Heart left ventricle (tissue), 16 donors: ENCODE measurements at regions of chr10 and their contacts with region 1.

Region 1: GRCh38 chr10:101012525-101013364 is 13.1 kb downstream of the LZTS2 start:
- DNase-seq: peak; percentile 88 to 94 (median 90)
- ATAC-seq: peak; percentile 84 to 94 (median 90)
- H3K4me3 ChIP-seq: no peak overlapping the region
- H3K27ac ChIP-seq: peak overlapping the region in 11 of 12 donors; percentile 26 to 74 (median 61)
- H3K4me1 ChIP-seq: peaks cover 0 to 46% (median 24%) of the 10 kb centered on the region in 12 donors
- H3K27me3 ChIP-seq: peaks cover 0 to 9% (median 3%) of the 10 kb centered on the region in 9 donors
- CTCF ChIP-seq: peak; percentile 85 to 97 (median 93)
- POLR2A ChIP-seq: no peak

Region 2: GRCh38 chr10:100562008-100562711 is 450.6 kb before region 1 on chr10:
- intact Hi-C with region 1: loop called in 1 of 10 experiments (anchors 5 kb)
- DNase-seq: peak; percentile 36 to 78 (median 50)
- ATAC-seq: peak; percentile 73 to 86 (median 85)
- H3K4me3 ChIP-seq: peak overlapping the region in 6 of 12 donors; percentile 3 to 30 (median 7)
- H3K27ac ChIP-seq: no peak overlapping the region
- H3K4me1 ChIP-seq: peaks cover 0 to 15% (median 10%) of the 10 kb centered on the region in 12 donors
- H3K27me3 ChIP-seq: peaks cover 6 to 57% (median 43%) of the 10 kb centered on the region in 9 donors
- CTCF ChIP-seq: peak; percentile 47 to 78 (median 70)
- POLR2A ChIP-seq: no peak

Region 3: GRCh38 chr10:100969187-100970075 is 43.3 kb before region 1 on chr10 and contains the start of gene SEMA4G:
- intact Hi-C with region 1: loop called in 5 of 10 experiments (anchors 1 to 2 kb)
- DNase-seq: peak in 2 of 5 donors; percentile 45 to 53
- ATAC-seq: peak; percentile 50 to 80 (median 73)
- H3K4me3 ChIP-seq: peak within 1 kb of the TSS; percentile 47 to 75 (median 62)
- H3K27ac ChIP-seq: peak within 1 kb of the TSS in 1 of 12 donors; percentile 9
- H3K4me1 ChIP-seq: peaks cover 0 to 17% (median 14%) of the 10 kb centered on the region in 12 donors
- H3K27me3 ChIP-seq: peaks cover 0 to 5% (median 0%) of the 10 kb centered on the region in 9 donors
- CTCF ChIP-seq: peak; percentile 58 to 79 (median 66)
- POLR2A ChIP-seq: no peak
- total RNA-seq, gene SEMA4G: 0.53 to 1.8 (median 1.1) TPM

Region 4: GRCh38 chr10:100993986-100994708 is 18.6 kb before region 1 on chr10:
- intact Hi-C with region 1: loop called (anchors 1 to 2 kb)
- DNase-seq: no peak
- ATAC-seq: no peak
- H3K4me3 ChIP-seq: no peak overlapping the region
- H3K27ac ChIP-seq: no peak overlapping the region
- H3K4me1 ChIP-seq: peaks cover 0 to 28% (median 14%) of the 10 kb centered on the region in 12 donors
- H3K27me3 ChIP-seq: no peaks in the 10 kb centered on the region
- CTCF ChIP-seq: peak; percentile 43 to 87 (median 68)
- POLR2A ChIP-seq: no peak

Region 5: DNA sequence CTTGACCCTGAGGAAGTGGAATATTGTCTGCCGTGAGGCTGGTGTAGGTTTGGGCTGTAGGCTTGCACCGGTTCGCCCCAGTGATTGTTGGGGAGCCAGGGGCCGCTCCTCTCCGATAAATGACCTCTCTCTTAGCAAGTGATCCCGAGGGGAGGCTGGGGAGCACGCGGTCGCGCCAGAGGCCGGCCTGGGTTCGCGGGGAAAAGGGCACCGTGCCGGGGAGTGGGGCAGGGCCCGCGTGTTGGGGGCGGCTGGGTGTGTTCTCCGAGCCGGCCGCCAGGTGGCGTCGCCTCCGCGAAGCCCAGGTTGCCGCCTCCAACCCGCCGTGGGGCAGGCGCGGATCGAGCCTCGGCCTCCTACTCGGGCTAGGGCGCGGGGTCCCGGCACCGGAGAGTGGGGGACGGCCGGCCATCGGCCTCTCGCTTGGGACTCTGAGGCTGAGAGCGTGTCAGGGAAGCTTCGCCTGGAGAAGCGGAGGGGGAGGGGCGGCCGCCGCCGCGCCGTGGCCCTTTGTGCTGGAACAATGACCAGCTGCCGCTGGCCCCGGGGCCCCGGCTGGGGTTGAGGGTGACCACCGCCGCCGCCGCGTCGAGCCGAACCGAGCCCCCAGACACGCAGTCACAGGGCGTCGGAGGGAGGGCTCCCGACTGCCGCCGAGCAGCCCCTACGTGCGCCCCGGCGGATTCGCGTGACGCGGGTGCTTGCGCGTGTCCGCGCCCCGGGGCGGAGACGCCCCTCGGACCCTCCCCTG is 13.6 kb before region 1 on chr10:
- intact Hi-C with region 1: loop called (anchors 1 to 2 kb)
- DNase-seq: peak; percentile 87 to 93 (median 89)
- ATAC-seq: peak; percentile 17 to 75 (median 62)
- H3K4me3 ChIP-seq: peak overlapping the region; percentile 62 to 99 (median 89)
- H3K27ac ChIP-seq: peak overlapping the region; percentile 93 to 100 (median 100)
- H3K4me1 ChIP-seq: peaks cover 8 to 66% (median 49%) of the 10 kb centered on the region in 12 donors
- H3K27me3 ChIP-seq: no peaks in the 10 kb centered on the region
- CTCF ChIP-seq: peak; percentile 92 to 99 (median 97)
- POLR2A ChIP-seq: peak; percentile 60 to 96